Left ventricle myocardium inferior (tissue), 1 donor: ENCODE measurements at regions of chr2 and their contacts with region 1.

Region 1: DNA sequence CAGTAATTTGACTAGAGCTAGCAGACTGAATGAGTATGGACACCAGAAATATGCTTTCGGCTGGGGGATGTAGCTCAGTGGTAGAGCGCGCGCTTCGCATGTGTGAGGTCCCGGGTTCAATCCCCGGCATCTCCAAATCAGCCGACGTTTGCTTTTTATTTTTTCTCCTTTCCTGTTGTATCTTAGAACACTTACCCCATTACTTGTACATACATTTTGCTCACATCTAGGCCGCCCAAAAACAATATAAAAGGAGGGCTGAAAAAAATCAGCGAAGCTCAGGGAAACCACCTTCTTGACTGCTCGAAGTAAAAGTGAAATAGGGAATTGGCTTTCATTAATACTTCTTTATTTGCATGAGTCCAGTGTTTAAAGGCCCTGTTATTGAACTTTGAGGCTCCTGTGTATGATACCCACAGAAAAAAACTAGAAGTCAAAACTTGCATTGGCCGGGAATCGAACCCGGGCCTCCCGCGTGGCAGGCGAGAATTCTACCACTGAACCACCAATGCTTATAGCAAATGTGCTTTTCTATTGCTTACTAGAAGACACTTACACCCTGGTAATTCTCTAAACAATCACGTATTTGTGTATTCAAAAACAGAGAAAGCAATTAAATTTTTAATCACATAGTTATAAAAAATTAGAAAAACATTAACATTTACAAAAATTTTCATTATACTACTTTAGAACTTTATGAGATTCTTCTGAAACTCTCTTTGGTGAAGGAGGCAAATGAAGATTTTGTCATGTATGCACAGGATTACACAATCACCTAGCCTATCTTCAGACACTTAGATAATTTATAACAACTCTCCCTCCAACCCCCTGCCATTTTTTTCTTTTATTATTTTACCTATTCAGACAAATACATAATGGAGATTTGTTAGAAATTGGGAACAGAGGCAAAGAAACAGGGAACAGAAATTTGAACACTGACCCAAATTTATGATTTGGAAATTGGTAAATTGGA is 35.2 kb upstream of the GPD2 start:
- DNase-seq: peak; percentile 50
- H3K4me3 ChIP-seq: peak overlapping the region; percentile 81
- H3K27ac ChIP-seq: peak overlapping the region; percentile 92
- H3K4me1 ChIP-seq: peaks cover 12% of the 10 kb centered on the region
- H3K27me3 ChIP-seq: no peaks in the 10 kb centered on the region
- CTCF ChIP-seq: no peak

Region 2: DNA sequence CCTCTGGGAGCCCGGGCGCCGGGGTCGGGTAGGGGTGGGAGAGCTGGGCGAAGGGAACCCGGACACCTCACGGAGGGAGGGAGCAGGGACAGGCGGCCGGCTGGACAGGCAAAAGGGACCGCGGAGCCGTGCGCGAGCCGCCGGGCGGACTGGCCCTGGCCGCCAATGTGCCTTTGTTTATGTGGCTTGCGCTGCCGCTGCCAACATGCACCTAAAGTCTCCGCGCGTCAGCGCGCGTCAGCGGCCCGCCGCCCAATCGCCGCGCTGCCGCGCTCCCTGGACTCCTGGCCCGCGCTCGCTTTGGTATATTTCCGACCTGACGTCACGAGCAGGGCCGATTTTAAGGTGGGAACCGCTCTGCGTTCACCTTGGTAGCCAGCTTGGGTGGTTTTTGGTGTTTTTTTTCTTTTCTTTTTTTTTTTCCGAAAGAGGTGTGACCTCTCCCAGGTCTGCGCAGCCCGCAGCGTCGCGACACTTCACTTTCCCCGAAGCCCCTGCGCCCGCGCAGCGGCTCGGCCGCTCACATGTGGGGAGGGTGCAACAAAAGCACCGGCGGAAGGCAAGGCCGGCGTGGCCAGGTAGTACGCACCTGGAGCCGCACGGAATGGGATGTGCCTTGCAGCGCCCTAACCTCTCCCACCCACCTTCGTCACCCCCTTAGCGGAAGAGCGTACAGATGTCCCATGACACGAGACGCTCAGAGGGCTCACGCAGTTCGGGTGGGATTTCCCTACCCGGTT is 68.3 kb before region 1 on chr2 and contains the start of gene NR4A2:
- intact Hi-C with region 1: loop called (anchors 10 kb)
- DNase-seq: peak; percentile 88
- H3K4me3 ChIP-seq: peak within 1 kb of the TSS; percentile 87
- H3K27ac ChIP-seq: peak within 1 kb of the TSS; percentile 99
- H3K4me1 ChIP-seq: peaks cover 51% of the 10 kb centered on the region
- H3K27me3 ChIP-seq: peaks cover 26% of the 10 kb centered on the region
- CTCF ChIP-seq: no peak
- total RNA-seq, gene NR4A2: 0.88 TPM

Region 3: GRCh38 chr2:156349605-156350004 is 51.4 kb before region 1 on chr2:
- intact Hi-C with region 1: loop called (anchors 5 kb)
- DNase-seq: no peak
- H3K4me3 ChIP-seq: no peak overlapping the region
- H3K27ac ChIP-seq: no peak overlapping the region
- H3K4me1 ChIP-seq: no peaks in the 10 kb centered on the region
- H3K27me3 ChIP-seq: no peaks in the 10 kb centered on the region
- CTCF ChIP-seq: no peak

Region 4: DNA sequence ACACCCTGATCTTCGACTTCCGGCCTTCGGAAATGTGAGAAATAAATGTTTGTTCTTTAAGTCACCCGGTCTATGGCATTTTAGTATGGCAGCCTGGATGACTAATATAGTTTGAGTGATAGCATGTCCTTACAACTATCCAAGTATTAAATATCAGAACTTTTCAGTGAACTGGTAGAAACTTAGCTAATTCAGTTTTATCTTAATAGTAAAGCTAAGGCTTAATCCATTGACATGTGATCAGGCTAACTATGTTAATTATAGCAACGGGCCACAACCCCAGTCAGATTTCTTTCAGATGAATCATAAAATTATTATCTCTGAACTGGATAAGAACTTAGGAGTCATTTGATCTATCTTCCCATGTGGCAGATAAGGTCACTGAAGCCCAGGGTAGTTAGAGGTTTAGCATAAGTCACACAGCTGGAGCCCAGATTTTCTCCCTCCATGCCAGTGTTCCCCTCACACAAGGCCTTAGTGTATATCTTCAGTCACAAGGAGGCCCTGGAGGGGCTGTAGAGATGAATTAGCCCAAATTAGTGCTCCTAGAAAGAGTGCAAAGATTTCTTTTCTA is 1660.0 kb after region 1 on chr2:
- intact Hi-C with region 1: loop called (anchors 10 kb)
- DNase-seq: no peak
- H3K4me3 ChIP-seq: no peak overlapping the region
- H3K27ac ChIP-seq: no peak overlapping the region
- H3K4me1 ChIP-seq: no peaks in the 10 kb centered on the region
- H3K27me3 ChIP-seq: no peaks in the 10 kb centered on the region
- CTCF ChIP-seq: no peak